Activated CD4-positive, alpha-beta T cell treated with anti-CD3 and anti-CD28 coated beads for 36 hours (primary cell): ENCODE measurements at regions of chr12 and their contacts with region 1.

Region 1: GRCh38 chr12:55966408-55967281 is at the start of gene CDK2:
- DNase-seq: peak; percentile 94
- ATAC-seq: peak; percentile 98
- H3K4me3 Mint-ChIP-seq: peak within 1 kb of the TSS; percentile 99
- H3K27ac Mint-ChIP-seq: peak within 1 kb of the TSS; percentile 94
- H3K4me1 Mint-ChIP-seq: peaks cover 30% of the 10 kb centered on the region
- H3K27me3 Mint-ChIP-seq: no peaks in the 10 kb centered on the region
- total RNA-seq, gene CDK2: 104 to 149 TPM

Region 2: GRCh38 chr12:55982319-55982936 is 15.8 kb after region 1 on chr12:
- CTCF ChIA-PET with region 1: no interaction called
- POLR2A ChIA-PET with region 1: interaction called, 10 read pairs
- intact Hi-C with region 1: no loop called
- DNase-seq: no peak
- ATAC-seq: no peak
- H3K4me3 Mint-ChIP-seq: no peak overlapping the region
- H3K27ac Mint-ChIP-seq: no peak overlapping the region
- H3K4me1 Mint-ChIP-seq: peaks cover 10% of the 10 kb centered on the region
- H3K27me3 Mint-ChIP-seq: no peaks in the 10 kb centered on the region